PC-9 (cell line): ENCODE measurements at regions of chr5 and their contacts with region 1.

Region 1: DNA sequence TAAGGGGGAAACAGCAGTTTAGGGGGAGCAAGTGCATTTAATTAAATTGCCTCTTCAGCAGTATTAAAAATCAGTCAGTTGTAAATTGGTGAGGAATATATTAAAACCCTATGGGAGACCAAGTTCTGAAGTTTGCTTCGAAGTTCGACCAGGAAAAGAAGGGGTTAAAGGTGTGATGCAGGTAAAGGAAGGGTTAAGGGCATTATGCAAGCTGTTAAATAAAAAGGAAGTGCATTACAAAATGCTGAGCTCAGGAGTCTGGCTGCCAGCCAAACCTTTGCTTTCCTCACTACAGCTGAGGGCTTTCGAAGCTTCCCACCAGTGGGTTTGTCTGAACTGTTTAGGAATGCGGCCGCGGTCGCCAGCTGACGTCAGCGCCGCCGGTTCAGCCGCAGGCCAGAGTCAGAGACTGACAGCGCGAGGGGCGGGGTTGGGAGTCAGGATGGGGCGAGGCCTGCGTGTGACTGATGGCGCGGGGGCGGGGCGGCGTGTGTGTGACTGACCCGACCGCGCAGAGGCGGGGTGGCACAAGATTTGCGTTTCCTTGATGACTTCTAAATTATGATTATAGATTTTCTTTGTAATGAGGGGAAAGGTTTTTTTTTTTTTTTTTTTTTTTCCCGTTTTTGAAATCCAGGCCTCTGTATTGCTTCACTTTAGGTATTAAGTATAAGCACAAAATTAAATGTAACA is 76.6 kb downstream of the ZSWIM6 start:
- DNase-seq: peak; percentile 98 to 99
- H3K4me3 ChIP-seq: peak overlapping the region; percentile 49; the same call in 1 of the 2 replicates
- H3K27ac ChIP-seq: peak overlapping the region; percentile 99
- H3K4me1 ChIP-seq: peaks cover 27% of the 10 kb centered on the region
- H3K27me3 ChIP-seq: no peaks in the 10 kb centered on the region
- CTCF ChIP-seq: no peak

Region 2: GRCh38 chr5:61162010-61162831 is 246.4 kb before region 1 on chr5 and contains the start of gene SMIM15:
- CTCF ChIA-PET with region 1: no interaction called
- POLR2A ChIA-PET with region 1: no interaction called
- intact Hi-C with region 1: loop called (anchors 2 kb)
- DNase-seq: peak; percentile 81 to 85
- H3K4me3 ChIP-seq: peak within 1 kb of the TSS; percentile 95
- H3K27ac ChIP-seq: peak within 1 kb of the TSS; percentile 76
- H3K4me1 ChIP-seq: peaks cover 30% of the 10 kb centered on the region
- H3K27me3 ChIP-seq: no peaks in the 10 kb centered on the region
- CTCF ChIP-seq: no peak
- total RNA-seq, gene SMIM15: 50.6 and 58.2 TPM in 2 replicates

Region 3: GRCh38 chr5:61366497-61367240 is 42.0 kb before region 1 on chr5:
- CTCF ChIA-PET with region 1: no interaction called
- POLR2A ChIA-PET with region 1: interaction called, 33 read pairs
- intact Hi-C with region 1: no loop called
- DNase-seq: no peak
- H3K4me3 ChIP-seq: no peak overlapping the region
- H3K27ac ChIP-seq: no peak overlapping the region
- H3K4me1 ChIP-seq: peaks cover 6% of the 10 kb centered on the region
- H3K27me3 ChIP-seq: no peaks in the 10 kb centered on the region
- CTCF ChIP-seq: no peak

Region 4: GRCh38 chr5:61449804-61450492 is 41.3 kb after region 1 on chr5:
- CTCF ChIA-PET with region 1: no interaction called
- POLR2A ChIA-PET with region 1: interaction called, 32 read pairs
- intact Hi-C with region 1: loop called (anchors 2 kb)
- DNase-seq: peak; percentile 29 to 56
- H3K4me3 ChIP-seq: no peak overlapping the region
- H3K27ac ChIP-seq: peak overlapping the region; percentile 66
- H3K4me1 ChIP-seq: peaks cover 23% of the 10 kb centered on the region
- H3K27me3 ChIP-seq: no peaks in the 10 kb centered on the region
- CTCF ChIP-seq: no peak

Region 5: GRCh38 chr5:61658592-61659008 is 250.0 kb after region 1 on chr5:
- CTCF ChIA-PET with region 1: no interaction called
- POLR2A ChIA-PET with region 1: no interaction called
- intact Hi-C with region 1: loop called (anchors 5 kb)
- DNase-seq: peak in 1 of 2 experiments; percentile 82
- H3K4me3 ChIP-seq: no peak overlapping the region
- H3K27ac ChIP-seq: no peak overlapping the region
- H3K4me1 ChIP-seq: no peaks in the 10 kb centered on the region
- H3K27me3 ChIP-seq: no peaks in the 10 kb centered on the region
- CTCF ChIP-seq: peak; percentile 94